ENCODE measurements at regions of chr11 and their contacts with region 1.

Region 1: GRCh38 chr11:122202951-122203456 is 87.0 kb upstream of the BLID start:
- DNase-seq: peak; percentile 84
- H3K4me3 ChIP-seq: no peak overlapping the region
- H3K27ac ChIP-seq: no peak overlapping the region
- H3K4me1 ChIP-seq: peaks cover 0 to 7% (median 2%) of the 10 kb centered on the region in 6 donors
- H3K27me3 ChIP-seq: peaks cover 0 to 30% (median 0%) of the 10 kb centered on the region in 7 donors
- CTCF ChIP-seq: peak; percentile 70 to 95 (median 85)
- POLR2A ChIP-seq: no peak

Region 2: DNA sequence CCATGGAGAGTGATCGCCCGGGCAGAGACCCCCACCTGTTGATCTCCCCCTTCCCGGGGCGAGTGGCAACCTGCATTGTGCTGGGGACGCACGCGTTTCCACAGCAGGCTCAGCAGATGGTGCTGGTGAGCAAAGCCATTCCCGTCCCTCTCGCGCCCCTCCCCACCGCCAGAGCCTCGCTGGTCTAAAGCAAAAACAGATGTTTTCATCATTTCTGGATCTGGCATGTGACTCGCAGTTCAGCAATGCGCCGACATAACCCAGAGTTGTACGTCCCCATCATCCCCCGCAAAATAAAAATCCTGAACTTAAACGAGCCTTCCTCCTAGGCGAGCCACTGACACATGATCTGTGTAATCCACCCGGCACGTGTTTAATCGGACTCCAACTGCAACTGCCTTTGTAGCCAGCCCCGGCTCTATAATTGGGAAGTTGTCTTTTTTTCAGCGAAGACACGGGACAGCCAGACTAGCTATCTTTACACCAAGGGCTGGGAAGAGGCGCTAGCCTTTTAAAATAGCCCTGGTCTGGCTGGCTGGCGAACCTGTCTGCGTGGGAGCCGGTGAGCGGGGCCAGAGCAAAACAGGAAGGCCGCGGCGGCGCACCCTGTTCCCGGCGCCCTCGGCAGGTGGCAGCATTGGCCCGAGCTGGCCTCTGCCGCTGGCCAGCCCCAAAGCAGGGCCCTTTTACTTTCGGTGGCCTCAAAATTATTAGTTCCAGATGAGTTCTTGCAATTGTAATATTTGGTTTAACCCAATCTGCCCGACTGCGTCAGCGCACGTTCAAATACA is 547.3 kb before region 1 on chr11:
- intact Hi-C with region 1: loop called (anchors 2 kb)
- DNase-seq: peak; percentile 94
- H3K4me3 ChIP-seq: peak overlapping the region; percentile 20 to 70 (median 41)
- H3K27ac ChIP-seq: peak overlapping the region; percentile 63 to 82 (median 72)
- H3K4me1 ChIP-seq: peaks cover 4 to 19% (median 15%) of the 10 kb centered on the region in 6 donors
- H3K27me3 ChIP-seq: peaks cover 0 to 16% (median 0%) of the 10 kb centered on the region in 7 donors
- CTCF ChIP-seq: peak; percentile 57 to 88 (median 79)
- POLR2A ChIP-seq: no peak

Measured in spleen (tissue), 13 donors.